ENCODE measurements at regions of chr12 and their contacts with region 1.

Region 1: DNA sequence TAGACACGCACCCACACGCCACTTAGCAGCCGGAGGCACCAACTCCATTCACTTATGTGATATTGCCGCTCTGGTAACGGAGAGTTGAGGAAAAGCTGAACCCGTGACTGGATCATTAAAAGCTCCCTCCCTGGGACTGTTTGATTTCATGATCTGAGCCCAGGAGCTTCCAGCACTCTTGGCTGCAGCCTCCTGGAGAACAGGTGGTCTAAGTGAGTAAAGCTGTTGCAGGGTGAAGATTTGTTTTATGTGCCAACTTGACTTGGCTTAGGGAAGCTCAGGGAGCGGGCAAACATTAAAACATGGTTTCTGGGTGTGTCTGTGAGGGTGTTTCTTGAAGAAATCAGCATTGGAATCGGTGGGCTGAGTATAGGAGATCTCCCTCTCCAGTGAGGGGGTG is 16.9 kb upstream of the TMEM132C start:
- DNase-seq: no peak

Region 2: GRCh38 chr12:126761420-126761819 is 1488.7 kb before region 1 on chr12:
- intact Hi-C with region 1: loop called in 1 of 2 experiments (anchors 5 kb)
- DNase-seq: no peak

Measured in posterior vena cava (tissue), 2 donors.